Posterior cingulate gyrus (tissue), 11 donors: ENCODE measurements at regions of chr1 and their contacts with region 1.

Region 1: GRCh38 chr1:22673486-22674409 is 20.7 kb downstream of the C1QB start:
- DNase-seq: peak in 8 of 10 donors; percentile 57 to 93 (median 72)

Region 2: DNA sequence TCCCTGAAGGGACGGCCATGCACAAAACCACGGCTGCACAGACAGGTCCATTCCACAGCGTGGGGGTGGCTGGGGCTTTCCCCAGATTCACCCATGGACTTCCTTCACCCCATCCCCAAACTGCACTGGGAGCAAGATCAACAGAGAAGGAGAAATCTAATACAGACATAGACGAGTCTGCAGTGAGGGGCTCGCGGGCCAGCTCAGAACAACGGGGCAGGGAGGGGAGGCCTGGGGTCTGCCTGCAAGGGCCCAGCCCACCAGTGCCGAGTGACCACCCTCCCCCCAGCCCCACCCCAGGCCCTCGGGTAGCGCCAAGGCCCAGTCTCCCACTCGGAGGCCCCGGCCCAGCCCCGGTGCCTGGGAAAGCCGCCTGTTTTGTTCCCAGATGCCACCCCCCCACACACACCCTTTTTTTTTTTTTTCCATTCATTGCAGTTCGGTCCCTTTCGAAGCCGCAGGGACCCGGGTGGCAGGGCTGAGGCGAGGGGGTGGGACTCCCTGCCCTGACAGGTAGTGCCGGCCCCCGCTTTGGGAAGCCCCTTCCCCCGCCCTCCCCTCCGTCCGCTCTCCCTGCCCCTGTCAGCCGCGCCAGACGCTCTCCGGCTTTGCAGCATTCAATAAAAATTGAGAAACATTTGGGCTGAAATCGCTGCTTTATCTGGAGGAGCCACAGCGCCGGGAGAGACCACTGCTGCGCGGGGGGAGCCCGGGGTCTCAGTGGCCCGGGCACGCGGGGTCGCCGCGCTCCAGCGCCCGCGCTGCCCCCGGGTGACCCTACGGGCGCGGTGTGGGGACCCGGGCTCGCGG is 36.3 kb after region 1 on chr1:
- intact Hi-C with region 1: no loop called
- DNase-seq: peak; percentile 47 to 94 (median 68)

Region 3: GRCh38 chr1:22930235-22930912 is 256.6 kb after region 1 on chr1:
- intact Hi-C with region 1: loop called (anchors 1 kb)
- DNase-seq: peak in 9 of 10 donors; percentile 36 to 89 (median 61)